ENCODE measurements at regions of chr13 and their contacts with region 1.

Region 1: DNA sequence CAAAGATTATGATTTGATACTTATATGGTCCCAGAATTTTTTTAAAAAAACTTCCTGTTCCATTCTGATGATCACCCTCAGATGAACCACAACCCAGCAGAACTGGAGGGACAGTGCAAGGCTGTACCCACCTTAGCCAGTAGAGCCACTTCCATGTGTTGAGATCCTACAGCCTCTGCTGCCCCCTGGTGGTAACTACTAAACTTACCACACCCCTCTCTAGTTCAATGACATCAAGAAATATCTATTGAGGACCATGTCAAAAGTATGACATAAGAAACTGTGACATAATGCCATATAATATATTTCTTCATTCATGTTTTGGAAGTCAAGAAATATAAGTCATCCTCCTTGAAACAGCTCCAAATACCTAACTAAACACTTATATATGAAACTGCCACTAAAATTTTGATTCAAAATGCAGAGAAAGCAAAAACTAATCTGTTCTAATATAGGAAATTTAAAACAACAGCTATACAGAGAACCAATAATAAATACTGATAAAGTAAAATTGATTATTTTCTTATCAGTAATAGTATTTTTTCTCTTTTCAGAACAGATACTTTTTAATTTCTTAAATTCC is 412.6 kb downstream of the KCTD12 start:
- DNase-seq: peak; percentile 79

Region 2: GRCh38 chr13:75691183-75691582 is 782.5 kb before region 1 on chr13:
- intact Hi-C with region 1: loop called in 1 of 2 experiments (anchors 10 kb)
- DNase-seq: no peak

Region 3: DNA sequence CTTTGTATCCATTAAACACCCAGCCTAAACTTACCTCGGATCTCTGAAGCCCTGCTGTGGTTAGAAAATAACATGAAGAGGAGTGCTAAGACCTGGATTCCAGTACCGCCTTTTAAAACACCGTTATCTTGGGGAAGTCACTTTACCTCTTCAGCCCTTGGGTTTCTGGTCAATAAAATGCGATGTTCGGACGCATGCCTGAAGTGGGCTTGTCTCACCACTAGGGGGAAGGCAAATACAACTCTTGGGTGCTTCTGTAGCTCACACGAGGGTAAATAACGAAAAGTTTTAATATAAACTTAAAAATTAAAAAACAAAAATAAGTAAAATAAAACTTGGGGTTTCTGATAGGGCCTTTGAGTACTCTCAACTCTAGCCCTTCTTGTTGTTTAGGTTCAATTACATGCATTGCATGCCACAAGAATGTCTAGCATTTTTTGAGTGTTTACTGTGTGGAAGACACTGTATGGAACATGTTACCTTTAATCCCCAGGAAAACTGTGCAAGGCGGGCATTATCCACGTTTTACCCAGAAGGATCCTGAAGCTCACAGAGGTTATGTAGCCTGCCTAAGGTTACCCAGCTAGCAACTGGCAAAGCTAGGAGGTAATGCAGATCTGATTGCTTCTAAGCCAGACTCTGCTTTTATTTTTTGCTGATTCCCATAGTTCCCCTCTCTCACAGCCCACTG is 597.1 kb before region 1 on chr13:
- intact Hi-C with region 1: loop called (anchors 2 kb)
- DNase-seq: no peak